ENCODE measurements at regions of chr10 and their contacts with region 1.

Region 1: DNA sequence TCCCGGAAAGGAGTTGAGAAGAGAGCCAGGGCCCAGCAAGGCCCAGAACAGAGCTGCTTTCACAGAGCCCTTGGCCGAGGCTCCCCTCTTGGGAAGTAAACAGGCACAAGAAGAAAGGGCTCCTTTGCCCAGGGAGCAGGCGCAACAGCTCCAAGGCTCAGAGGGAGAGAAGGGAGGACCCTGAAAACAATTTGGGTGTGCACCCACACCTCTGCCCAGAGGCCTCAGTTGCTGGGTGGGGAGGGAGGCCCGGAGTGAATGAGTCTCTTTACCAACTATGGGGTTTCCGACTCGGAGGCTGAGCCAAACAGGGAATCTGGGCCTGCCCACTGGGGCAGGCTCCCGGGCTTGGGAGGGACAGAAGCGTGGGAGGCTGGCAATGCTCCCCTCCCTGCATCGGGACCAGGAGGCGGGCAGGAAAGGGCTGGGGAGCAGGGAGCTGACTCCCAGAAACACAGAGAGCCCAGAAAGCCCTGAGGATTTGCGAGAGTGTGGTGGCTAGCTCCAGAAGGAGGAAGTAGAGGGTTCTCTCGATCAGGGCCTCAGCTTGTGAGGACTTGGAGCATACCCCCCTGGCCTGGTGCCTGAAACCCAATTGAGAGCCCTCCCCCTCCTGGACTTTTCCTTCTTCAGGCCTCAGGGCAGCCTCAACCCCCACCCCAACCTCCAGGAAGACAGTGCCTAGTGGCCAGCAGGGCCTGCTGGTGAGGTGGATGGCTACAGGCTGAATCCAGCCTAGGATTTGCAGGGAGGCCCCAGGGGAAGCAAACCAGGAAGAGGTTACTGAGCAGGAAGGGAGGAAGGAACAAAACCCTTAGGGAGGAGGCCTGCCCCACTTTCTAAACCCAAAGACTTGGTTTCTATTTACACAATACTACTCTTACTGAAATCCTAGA is 6.2 kb downstream of the C10orf105 start:
- DNase-seq: no peak
- ATAC-seq: peak; percentile 65 to 66
- H3K4me3 Mint-ChIP-seq: peak overlapping the region; percentile 73 to 92 (median 85)
- H3K27ac Mint-ChIP-seq: peak overlapping the region; percentile 97 to 100 (median 99)
- H3K4me1 Mint-ChIP-seq: peaks cover 31 to 93% (median 68%) of the 10 kb centered on the region in 4 donors
- H3K27me3 Mint-ChIP-seq: no peaks in the 10 kb centered on the region

Region 2: DNA sequence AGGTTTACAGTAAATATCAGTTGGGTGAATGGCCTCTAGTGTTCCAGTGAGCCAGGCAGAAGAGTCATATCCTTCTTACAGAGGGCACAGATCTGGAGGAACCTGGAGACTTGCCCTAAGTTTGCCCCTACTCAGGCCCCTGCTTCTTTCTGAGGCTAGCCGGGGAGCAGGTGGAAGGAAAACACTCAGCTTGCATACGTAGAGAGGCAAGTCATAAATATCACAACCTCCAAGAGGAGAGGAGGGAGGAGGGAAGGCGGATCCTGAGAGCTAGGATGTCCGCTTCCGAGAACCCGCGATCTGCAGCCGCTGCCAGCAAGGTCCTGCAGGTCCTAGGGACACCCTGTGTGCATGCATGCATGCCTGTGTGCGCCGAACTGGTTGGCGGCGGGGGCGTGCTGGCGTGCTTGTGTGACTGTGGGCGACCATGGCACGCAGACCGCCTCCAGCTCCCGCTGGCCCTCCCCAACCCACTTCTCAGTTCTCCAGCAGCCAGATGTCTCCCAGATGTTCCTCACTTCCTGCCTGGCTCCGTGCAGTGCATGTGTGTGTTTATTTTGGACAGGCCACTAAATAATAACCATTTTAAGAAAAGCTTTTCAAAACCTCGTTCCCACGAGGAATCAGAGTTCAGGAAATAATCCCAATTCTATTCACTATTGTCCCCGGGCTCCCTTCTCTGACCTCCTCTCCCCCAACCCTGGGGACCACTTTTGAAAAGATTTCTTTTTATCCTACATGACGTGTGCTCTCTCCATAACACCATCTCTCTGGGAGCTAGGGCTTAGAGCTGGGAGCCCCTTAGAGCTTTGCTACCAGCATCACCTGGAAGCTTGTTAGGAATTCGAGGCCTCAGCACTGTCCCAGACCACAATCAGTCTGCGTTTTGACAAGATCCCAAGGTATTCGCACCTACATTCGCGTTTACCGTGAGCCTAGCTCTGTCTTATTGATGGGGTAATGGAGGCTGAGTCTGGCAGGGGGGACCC is 468.7 kb before region 1 on chr10:
- POLR2A ChIA-PET with region 1: no interaction called
- DNase-seq: no peak
- ATAC-seq: no peak
- H3K4me3 Mint-ChIP-seq: no peak overlapping the region
- H3K27ac Mint-ChIP-seq: no peak overlapping the region
- H3K4me1 Mint-ChIP-seq: no peaks in the 10 kb centered on the region
- H3K27me3 Mint-ChIP-seq: peaks cover 0 to 15% (median 8%) of the 10 kb centered on the region in 5 donors

Region 3: GRCh38 chr10:71679425-71679824 is 34.0 kb before region 1 on chr10:
- POLR2A ChIA-PET with region 1: no interaction called
- DNase-seq: no peak
- ATAC-seq: no peak
- H3K4me3 Mint-ChIP-seq: no peak overlapping the region
- H3K27ac Mint-ChIP-seq: peak overlapping the region in 1 of 10 donors; percentile 9
- H3K4me1 Mint-ChIP-seq: peaks cover 0 to 10% (median 3%) of the 10 kb centered on the region in 4 donors
- H3K27me3 Mint-ChIP-seq: peaks cover 0 to 3% (median 0%) of the 10 kb centered on the region in 5 donors

Region 4: DNA sequence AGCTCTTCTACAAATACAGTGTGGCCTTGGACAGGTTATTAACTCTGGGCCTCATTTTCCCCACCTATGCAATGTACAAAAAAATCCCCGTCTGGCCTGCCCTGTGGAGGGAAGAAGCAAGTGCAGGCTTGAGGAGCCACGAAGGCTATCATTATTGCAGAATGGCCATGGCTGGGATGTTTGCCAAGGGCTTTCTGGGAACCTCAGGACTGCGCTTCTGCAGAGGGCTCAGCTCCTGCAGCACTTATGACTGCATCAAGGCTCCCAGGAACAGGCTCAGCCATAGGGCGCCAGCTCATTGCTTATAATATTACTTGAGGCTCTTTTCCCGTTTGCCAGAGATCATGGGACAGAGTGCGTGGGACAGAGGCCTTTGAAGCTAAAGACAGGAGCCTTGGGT is 26.7 kb after region 1 on chr10:
- POLR2A ChIA-PET with region 1: interaction called, 71 read pairs
- DNase-seq: no peak
- ATAC-seq: no peak
- H3K4me3 Mint-ChIP-seq: peak overlapping the region; percentile 22 to 92 (median 66)
- H3K27ac Mint-ChIP-seq: peak overlapping the region; percentile 89 to 100 (median 96)
- H3K4me1 Mint-ChIP-seq: peaks cover 70 to 100% (median 100%) of the 10 kb centered on the region in 4 donors
- H3K27me3 Mint-ChIP-seq: no peaks in the 10 kb centered on the region

Region 5: GRCh38 chr10:71748671-71749191 is 35.3 kb after region 1 on chr10:
- POLR2A ChIA-PET with region 1: interaction called, 71 read pairs
- DNase-seq: peak; percentile 59 to 91 (median 81)
- ATAC-seq: peak; percentile 78 to 85
- H3K4me3 Mint-ChIP-seq: peak overlapping the region; percentile 66 to 95 (median 85)
- H3K27ac Mint-ChIP-seq: peak overlapping the region; percentile 95 to 100 (median 98)
- H3K4me1 Mint-ChIP-seq: peaks cover 56 to 100% (median 98%) of the 10 kb centered on the region in 4 donors
- H3K27me3 Mint-ChIP-seq: no peaks in the 10 kb centered on the region

Region 6: DNA sequence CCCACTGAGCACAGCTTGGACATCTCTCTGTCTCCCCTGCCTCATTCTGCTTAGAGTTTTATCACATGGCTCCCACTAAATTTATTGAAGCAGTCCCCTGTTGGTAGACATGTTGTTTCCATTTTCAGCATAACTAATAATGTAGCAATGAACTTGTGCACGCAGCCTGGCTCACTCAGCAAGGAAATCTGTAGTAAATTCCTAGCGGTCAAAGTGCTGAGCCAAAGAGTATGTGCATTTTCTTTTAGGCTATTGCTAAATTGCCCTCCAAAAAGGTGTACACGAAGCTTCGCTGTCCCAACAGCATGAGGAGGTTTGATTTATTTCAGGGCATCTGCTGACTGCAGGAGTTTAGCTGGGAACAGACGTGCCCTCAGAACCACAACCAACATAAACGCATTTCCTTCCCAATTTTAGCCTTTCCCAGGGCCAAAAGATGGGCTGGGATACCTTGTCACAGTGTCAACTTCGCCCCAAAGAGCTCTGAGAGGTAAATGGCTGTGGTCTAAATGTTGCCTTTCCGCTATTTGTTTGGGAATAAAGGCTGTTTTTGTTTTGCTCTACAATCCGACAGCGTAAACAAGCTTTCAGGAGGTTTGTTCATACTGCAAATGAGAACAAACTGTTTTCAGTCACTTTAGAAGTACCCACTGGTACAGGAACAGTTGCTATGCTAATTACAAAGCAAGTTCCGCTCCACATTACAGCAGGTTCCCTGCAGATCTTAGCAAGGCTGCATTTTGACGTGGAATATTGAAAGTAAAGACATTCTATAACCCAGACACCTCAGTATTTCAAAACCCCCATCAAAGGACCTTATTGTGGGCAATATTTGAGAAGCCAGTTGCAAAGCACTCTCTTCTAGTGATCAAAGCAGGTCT is 43.2 kb after region 1 on chr10:
- POLR2A ChIA-PET with region 1: interaction called, 34 read pairs
- DNase-seq: peak in 7 of 10 donors; percentile 30 to 87 (median 65)
- ATAC-seq: peak; percentile 72 to 91
- H3K4me3 Mint-ChIP-seq: peak overlapping the region; percentile 61 to 86 (median 80)
- H3K27ac Mint-ChIP-seq: peak overlapping the region; percentile 90 to 99 (median 97)
- H3K4me1 Mint-ChIP-seq: peaks cover 48 to 94% (median 90%) of the 10 kb centered on the region in 4 donors
- H3K27me3 Mint-ChIP-seq: no peaks in the 10 kb centered on the region

Region 7: DNA sequence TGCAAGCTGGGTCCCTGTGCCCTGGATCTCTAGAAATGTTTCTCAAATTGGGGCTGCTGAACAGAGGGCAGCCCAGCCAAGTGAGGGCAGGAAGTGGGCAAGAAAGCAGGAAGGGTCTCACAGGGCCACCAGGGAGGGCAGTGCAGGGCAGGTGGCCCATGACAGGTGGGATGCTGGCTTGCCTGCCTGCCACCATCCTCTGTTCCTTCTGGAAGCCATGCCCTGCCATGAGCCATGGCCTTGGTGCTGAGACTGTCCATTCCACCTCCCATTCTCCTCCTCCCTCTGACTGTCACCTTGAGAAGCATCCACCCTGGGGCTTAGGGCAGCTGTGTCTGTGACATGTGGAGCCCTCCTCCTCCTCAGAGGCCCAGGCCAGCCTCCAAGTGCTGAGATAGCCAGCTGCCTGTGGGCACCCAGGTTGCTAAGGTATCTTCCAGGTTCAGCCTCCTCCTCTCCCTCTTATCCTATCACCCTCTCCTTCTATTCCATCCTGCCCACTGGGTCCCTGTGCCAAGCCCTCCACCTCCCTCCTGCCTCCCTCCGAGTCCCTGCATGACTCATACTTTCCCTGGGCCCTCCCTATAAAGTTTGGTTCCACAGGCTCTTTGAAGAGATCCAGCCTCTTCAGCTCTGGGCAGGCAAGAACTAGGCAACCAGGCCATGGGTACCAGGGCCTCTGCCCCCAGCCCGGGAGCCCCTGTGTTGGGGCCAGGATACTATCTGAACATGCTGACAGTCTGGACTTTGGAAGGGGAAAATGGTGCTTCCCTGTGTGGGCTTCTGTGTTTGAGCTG is 58.6 kb after region 1 on chr10:
- POLR2A ChIA-PET with region 1: interaction called, 194 read pairs
- DNase-seq: peak in 1 of 10 donors; percentile 47
- ATAC-seq: no peak
- H3K4me3 Mint-ChIP-seq: peak overlapping the region; percentile 82 to 99 (median 94)
- H3K27ac Mint-ChIP-seq: peak overlapping the region; percentile 80 to 98 (median 94)
- H3K4me1 Mint-ChIP-seq: peaks cover 34 to 90% (median 72%) of the 10 kb centered on the region in 4 donors
- H3K27me3 Mint-ChIP-seq: no peaks in the 10 kb centered on the region

Measured in naive thymus-derived CD8-positive, alpha-beta T cell (primary cell).